Heart left ventricle (tissue), 16 donors: ENCODE measurements at regions of chr4 and their contacts with region 1.

Region 1: GRCh38 chr4:150078637-150079581 is 664 bp downstream of the DCLK2 start:
- DNase-seq: peak; percentile 29 to 78 (median 67)
- ATAC-seq: peak; percentile 29 to 78 (median 67)
- H3K4me3 ChIP-seq: peak overlapping the region; percentile 57 to 90 (median 80)
- H3K27ac ChIP-seq: peak overlapping the region; percentile 73 to 94 (median 84)
- H3K4me1 ChIP-seq: peaks cover 0 to 39% (median 16%) of the 10 kb centered on the region in 12 donors
- H3K27me3 ChIP-seq: peaks cover 0 to 5% (median 0%) of the 10 kb centered on the region in 9 donors
- CTCF ChIP-seq: peak in 5 of 12 donors; percentile 7 to 32 (median 20)
- POLR2A ChIP-seq: no peak

Region 2: GRCh38 chr4:149999485-150000074 is 79.3 kb before region 1 on chr4:
- intact Hi-C with region 1: loop called in 1 of 10 experiments (anchors 10 kb)
- DNase-seq: peak in 3 of 5 donors; percentile 32 to 37 (median 37)
- ATAC-seq: peak in 3 of 4 donors; percentile 78 to 80 (median 78)
- H3K4me3 ChIP-seq: no peak overlapping the region
- H3K27ac ChIP-seq: no peak overlapping the region
- H3K4me1 ChIP-seq: peaks cover 0 to 10% (median 8%) of the 10 kb centered on the region in 12 donors
- H3K27me3 ChIP-seq: no peaks in the 10 kb centered on the region
- CTCF ChIP-seq: peak; percentile 59 to 83 (median 73)
- POLR2A ChIP-seq: no peak

Region 3: DNA sequence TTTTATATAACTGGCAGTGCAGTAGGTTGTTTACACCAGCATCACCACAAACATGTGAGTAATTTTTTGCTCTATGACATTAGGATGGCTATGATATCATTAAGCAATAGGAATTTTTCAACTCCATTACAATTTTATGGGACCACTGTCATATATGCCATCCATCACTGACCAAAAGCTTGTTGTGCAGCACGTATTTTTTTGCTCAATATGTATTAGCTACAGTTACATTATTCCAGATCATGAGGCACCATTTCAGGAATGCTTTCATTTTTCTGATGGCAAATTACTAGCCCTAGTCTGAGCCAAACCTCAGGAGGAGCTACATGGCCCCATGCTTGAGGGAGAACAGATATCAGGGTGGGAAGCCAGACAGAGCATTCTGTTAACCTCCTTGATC is 57.4 kb before region 1 on chr4:
- intact Hi-C with region 1: loop called in 2 of 10 experiments (anchors 2 to 10 kb)
- DNase-seq: no peak
- ATAC-seq: no peak
- H3K4me3 ChIP-seq: no peak overlapping the region
- H3K27ac ChIP-seq: no peak overlapping the region
- H3K4me1 ChIP-seq: no peaks in the 10 kb centered on the region
- H3K27me3 ChIP-seq: no peaks in the 10 kb centered on the region
- CTCF ChIP-seq: no peak
- POLR2A ChIP-seq: no peak

Region 4: GRCh38 chr4:150126201-150126863 is 47.4 kb after region 1 on chr4:
- intact Hi-C with region 1: no loop called
- DNase-seq: peak in 1 of 5 donors; percentile 17
- ATAC-seq: peak; percentile 65 to 88 (median 82)
- H3K4me3 ChIP-seq: no peak overlapping the region
- H3K27ac ChIP-seq: peak overlapping the region in 2 of 12 donors; percentile 43 to 44
- H3K4me1 ChIP-seq: peaks cover 0 to 26% (median 15%) of the 10 kb centered on the region in 12 donors
- H3K27me3 ChIP-seq: no peaks in the 10 kb centered on the region
- CTCF ChIP-seq: no peak
- POLR2A ChIP-seq: no peak

Region 5: GRCh38 chr4:150152766-150153165 is 73.9 kb after region 1 on chr4:
- intact Hi-C with region 1: loop called in 1 of 10 experiments (anchors 5 kb)
- DNase-seq: no peak
- ATAC-seq: no peak
- H3K4me3 ChIP-seq: no peak overlapping the region
- H3K27ac ChIP-seq: no peak overlapping the region
- H3K4me1 ChIP-seq: peaks cover 0 to 42% (median 13%) of the 10 kb centered on the region in 12 donors
- H3K27me3 ChIP-seq: no peaks in the 10 kb centered on the region
- CTCF ChIP-seq: no peak
- POLR2A ChIP-seq: no peak

Region 6: GRCh38 chr4:150209140-150209829 is 130.4 kb after region 1 on chr4:
- intact Hi-C with region 1: loop called (anchors 2 to 10 kb)
- DNase-seq: peak; percentile 63 to 75 (median 68)
- ATAC-seq: peak; percentile 71 to 84 (median 79)
- H3K4me3 ChIP-seq: no peak overlapping the region
- H3K27ac ChIP-seq: no peak overlapping the region
- H3K4me1 ChIP-seq: peaks cover 0 to 54% (median 18%) of the 10 kb centered on the region in 12 donors
- H3K27me3 ChIP-seq: no peaks in the 10 kb centered on the region
- CTCF ChIP-seq: peak; percentile 41 to 74 (median 64)
- POLR2A ChIP-seq: no peak